HCT116 (cell line): ENCODE measurements at regions of chr15 and their contacts with region 1.

Region 1: GRCh38 chr15:94119923-94120775 is 111.2 kb upstream of the MCTP2 start:
- DNase-seq: peak; percentile 82
- ATAC-seq: peak; percentile 99
- H3K4me3 ChIP-seq: no peak overlapping the region
- H3K27ac ChIP-seq: no peak overlapping the region
- H3K4me1 ChIP-seq: no peaks in the 10 kb centered on the region
- H3K27me3 ChIP-seq: peaks cover 6% of the 10 kb centered on the region
- CTCF ChIP-seq: peak; percentile 86 to 99 (median 97)
- POLR2A ChIP-seq: no peak
- RAD21 ChIP-seq: peak; percentile 98

Region 2: DNA sequence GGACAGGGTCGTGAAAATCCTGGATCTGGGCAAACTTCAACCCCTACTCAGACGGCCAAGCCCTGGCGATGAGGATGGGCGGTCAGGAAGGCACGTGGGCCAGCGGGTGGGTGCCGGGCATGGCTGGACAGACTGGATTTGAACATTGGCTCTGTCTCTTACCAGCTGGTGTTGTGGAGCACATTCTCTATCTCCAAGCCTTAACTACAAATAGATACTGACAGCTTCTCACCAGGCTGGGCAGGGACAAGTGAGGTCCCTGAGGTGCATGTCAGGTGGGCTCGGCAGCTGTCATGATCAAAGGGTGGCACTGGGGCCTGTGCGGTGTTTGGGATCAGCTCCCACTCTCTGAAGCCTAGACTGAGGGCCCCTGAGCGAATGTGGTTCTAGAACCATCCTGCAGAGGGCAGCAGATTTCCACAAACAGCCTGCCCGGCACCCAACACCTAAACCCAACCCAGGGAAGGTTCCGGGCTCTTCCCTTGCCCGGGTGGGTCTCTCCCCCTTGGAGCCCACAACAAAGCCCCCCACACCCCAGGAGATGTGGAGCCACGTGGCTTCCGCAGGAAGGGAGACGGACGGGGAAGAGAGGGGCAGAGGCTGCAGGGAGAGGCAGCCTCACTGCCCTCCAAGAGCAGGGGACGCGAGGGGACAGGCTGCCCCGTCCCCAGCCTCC is 1089.6 kb before region 1 on chr15:
- CTCF ChIA-PET with region 1: interaction called, 125 read pairs
- POLR2A ChIA-PET with region 1: no interaction called
- RAD21 ChIA-PET with region 1: interaction called, 21 to 25 read pairs
- intact Hi-C with region 1: loop called (anchors 1 kb)
- DNase-seq: peak; percentile 48
- ATAC-seq: peak; percentile 91
- H3K4me3 ChIP-seq: no peak overlapping the region
- H3K27ac ChIP-seq: no peak overlapping the region
- H3K4me1 ChIP-seq: peaks cover 0 to under 1% of the 10 kb centered on the region in 2 experiments; a peak in 1 of 4 replicates
- H3K27me3 ChIP-seq: no peaks in the 10 kb centered on the region
- CTCF ChIP-seq: peak; percentile 75 to 85 (median 80); a peak in 5 of 6 replicates
- POLR2A ChIP-seq: no peak
- RAD21 ChIP-seq: peak; percentile 89

Region 3: GRCh38 chr15:93035953-93036800 is 1084.0 kb before region 1 on chr15:
- CTCF ChIA-PET with region 1: interaction called, 125 read pairs
- POLR2A ChIA-PET with region 1: no interaction called
- RAD21 ChIA-PET with region 1: interaction called, 21 to 25 read pairs
- intact Hi-C with region 1: no loop called
- DNase-seq: peak; percentile 37
- ATAC-seq: peak; percentile 86
- H3K4me3 ChIP-seq: no peak overlapping the region
- H3K27ac ChIP-seq: no peak overlapping the region
- H3K4me1 ChIP-seq: peaks cover 0 to 9% of the 10 kb centered on the region in 2 experiments; a peak in 1 of 4 replicates
- H3K27me3 ChIP-seq: no peaks in the 10 kb centered on the region
- CTCF ChIP-seq: peak; percentile 37 to 73 (median 68); a peak in 5 of 6 replicates
- POLR2A ChIP-seq: no peak
- RAD21 ChIP-seq: peak; percentile 57; the same call in 1 of the 2 replicates

Region 4: DNA sequence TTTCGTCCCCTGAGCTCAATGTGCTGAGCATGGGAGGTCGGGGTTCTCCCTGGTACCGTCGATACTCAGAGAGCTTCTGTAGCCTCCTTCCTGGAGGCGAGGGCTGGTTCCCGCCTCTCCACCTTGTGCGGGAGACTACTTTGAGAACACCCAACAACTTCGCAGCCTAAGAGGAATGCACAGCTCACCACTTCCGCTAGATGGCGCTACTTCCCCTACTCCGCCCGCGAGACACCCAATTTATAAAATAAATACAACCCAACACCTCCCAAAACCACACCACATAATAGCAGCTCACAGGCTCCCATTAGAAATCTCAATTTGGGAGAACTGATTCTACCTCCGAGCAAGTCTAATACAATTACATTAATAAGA is 1032.3 kb before region 1 on chr15:
- CTCF ChIA-PET with region 1: interaction called, 15 read pairs
- POLR2A ChIA-PET with region 1: no interaction called
- RAD21 ChIA-PET with region 1: interaction called in 1 of 2 experiments, 6 read pairs
- intact Hi-C with region 1: loop called (anchors 1 kb)
- DNase-seq: peak; percentile 22
- ATAC-seq: peak; percentile 93
- H3K4me3 ChIP-seq: no peak overlapping the region
- H3K27ac ChIP-seq: no peak overlapping the region
- H3K4me1 ChIP-seq: peaks cover 0 to 5% of the 10 kb centered on the region in 2 experiments; a peak in 1 of 4 replicates
- H3K27me3 ChIP-seq: peaks cover 40% of the 10 kb centered on the region
- CTCF ChIP-seq: peak; percentile 63 to 89 (median 87); a peak in 5 of 6 replicates
- POLR2A ChIP-seq: no peak
- RAD21 ChIP-seq: peak; percentile 77

Region 5: DNA sequence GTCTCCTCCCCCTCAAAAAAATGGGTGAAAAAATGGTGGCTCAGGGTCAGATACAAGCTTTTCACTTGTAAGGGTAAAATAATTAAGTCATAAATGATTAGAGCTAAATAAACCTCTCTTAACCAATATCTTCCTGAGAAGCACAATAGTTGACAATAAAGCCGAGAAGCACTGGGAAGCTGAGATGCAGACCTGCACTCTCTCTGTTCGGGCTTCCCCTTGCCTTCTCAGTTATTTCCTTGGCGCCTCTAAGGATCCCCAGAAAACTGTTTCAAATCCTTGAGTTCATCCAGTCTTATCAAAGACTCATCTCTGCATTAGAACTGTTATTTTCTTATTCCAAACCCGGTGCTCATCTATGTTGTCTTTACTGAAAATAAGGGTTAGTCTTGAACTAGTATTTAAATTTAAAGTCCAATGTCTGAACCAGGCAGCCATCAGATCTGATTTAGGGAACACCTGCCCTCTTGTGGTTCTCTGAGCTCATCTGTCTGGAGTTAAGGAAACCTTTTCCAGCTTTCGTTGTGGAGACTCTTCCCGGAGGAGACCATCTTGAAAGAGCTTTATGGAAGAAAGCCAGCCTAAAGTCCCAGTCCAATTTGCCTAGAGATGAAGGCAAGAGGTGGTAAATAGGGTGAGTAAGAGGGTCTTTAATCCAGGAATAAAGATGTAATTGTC is 145.2 kb before region 1 on chr15:
- CTCF ChIA-PET with region 1: interaction called, 17 read pairs
- POLR2A ChIA-PET with region 1: no interaction called
- RAD21 ChIA-PET with region 1: no interaction called
- intact Hi-C with region 1: no loop called
- DNase-seq: peak; percentile 2
- ATAC-seq: peak; percentile 49; the same call in 1 of the 2 replicates
- H3K4me3 ChIP-seq: no peak overlapping the region
- H3K27ac ChIP-seq: no peak overlapping the region
- H3K4me1 ChIP-seq: no peaks in the 10 kb centered on the region
- H3K27me3 ChIP-seq: no peaks in the 10 kb centered on the region
- CTCF ChIP-seq: peak in 2 of 3 experiments; percentile 35 to 46; a peak in 4 of 6 replicates
- POLR2A ChIP-seq: no peak
- RAD21 ChIP-seq: peak; percentile 31; the same call in 1 of the 2 replicates

Region 6: DNA sequence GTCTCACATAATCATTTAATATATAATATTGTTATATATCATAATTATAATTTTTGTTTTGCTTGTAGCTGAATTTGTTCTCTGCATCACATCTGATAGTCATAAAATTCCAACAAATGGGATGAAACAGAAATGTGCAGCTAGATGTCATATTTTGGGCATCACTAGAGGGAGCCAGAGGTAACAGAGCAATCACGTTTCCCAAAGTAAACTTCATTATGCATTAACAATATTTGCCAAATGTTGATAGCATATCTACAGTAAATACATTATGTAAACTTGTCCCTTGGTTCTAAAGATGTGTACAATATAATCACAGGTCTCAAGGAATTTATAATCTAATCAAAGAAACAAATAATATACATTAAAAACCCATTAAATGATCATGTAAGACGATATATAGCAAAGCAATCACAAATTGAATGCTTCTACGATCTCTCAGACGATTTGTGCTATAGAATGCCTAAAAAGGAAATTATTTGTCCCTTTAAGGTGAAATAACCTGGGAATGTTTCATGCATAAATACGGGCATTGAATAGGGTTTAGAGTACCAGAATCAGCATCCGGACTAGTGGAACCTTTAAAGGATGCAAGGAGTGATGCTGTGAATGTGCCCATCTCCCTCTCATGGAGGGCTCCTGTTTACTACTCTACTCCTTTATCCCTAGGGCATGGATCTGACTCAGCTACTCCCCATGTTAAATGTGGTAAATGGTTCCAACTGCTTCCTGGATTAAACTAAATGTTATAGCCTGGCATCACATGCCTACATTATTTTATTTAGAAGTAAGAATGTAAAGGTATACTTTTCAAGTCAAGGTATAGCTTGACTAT is 122.8 kb before region 1 on chr15:
- CTCF ChIA-PET with region 1: interaction called, 26 read pairs
- POLR2A ChIA-PET with region 1: no interaction called
- RAD21 ChIA-PET with region 1: interaction called in 1 of 2 experiments, 4 read pairs
- intact Hi-C with region 1: loop called (anchors 1 kb)
- DNase-seq: peak; percentile 7
- ATAC-seq: peak; percentile 55; the same call in 1 of the 2 replicates
- H3K4me3 ChIP-seq: no peak overlapping the region
- H3K27ac ChIP-seq: no peak overlapping the region
- H3K4me1 ChIP-seq: no peaks in the 10 kb centered on the region
- H3K27me3 ChIP-seq: no peaks in the 10 kb centered on the region
- CTCF ChIP-seq: peak; percentile 32 to 63 (median 62); a peak in 5 of 6 replicates
- POLR2A ChIP-seq: no peak
- RAD21 ChIP-seq: peak; percentile 48

Region 7: DNA sequence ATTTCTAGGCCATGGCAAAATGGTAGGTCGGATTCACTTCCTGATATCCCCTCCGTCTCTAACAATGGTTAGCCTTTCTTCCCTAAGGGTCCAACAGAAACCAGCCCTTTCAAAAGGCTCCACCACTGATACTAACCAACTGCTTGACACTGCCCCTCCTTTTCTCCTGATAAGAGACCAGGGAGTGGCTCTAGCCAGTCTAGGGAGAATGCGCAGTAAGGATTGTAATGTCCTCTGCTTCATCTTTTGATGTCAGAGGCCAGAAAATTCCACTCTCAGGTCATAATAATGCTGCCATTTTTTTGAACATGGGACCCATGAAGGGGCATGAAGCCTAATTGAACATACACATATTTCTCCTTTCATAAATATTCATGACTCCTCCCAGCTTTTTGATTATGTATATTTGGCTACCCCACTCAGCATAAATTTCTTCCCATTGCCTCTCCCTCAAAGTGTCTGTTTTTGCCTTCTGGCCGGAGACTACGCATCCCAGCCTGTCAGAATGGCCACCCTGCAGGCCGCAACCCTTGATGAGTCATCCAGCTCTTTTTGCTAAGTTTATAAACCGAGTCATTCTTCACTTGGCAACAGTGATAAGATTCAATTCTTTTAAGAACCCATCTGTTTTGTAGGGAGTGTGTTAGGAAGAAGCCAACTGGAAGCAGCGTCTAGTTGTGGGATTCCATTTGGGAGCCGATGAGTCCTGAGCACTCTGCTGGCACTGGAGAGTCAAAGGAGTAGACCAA is 77.8 kb before region 1 on chr15:
- CTCF ChIA-PET with region 1: no interaction called
- POLR2A ChIA-PET with region 1: no interaction called
- RAD21 ChIA-PET with region 1: no interaction called
- intact Hi-C with region 1: no loop called
- DNase-seq: no peak
- ATAC-seq: no peak
- H3K4me3 ChIP-seq: no peak overlapping the region
- H3K27ac ChIP-seq: no peak overlapping the region
- H3K4me1 ChIP-seq: no peaks in the 10 kb centered on the region
- H3K27me3 ChIP-seq: no peaks in the 10 kb centered on the region
- CTCF ChIP-seq: no peak
- POLR2A ChIP-seq: no peak
- RAD21 ChIP-seq: no peak